ENCODE measurements at regions of chr10 and their contacts with region 1.

Region 1: DNA sequence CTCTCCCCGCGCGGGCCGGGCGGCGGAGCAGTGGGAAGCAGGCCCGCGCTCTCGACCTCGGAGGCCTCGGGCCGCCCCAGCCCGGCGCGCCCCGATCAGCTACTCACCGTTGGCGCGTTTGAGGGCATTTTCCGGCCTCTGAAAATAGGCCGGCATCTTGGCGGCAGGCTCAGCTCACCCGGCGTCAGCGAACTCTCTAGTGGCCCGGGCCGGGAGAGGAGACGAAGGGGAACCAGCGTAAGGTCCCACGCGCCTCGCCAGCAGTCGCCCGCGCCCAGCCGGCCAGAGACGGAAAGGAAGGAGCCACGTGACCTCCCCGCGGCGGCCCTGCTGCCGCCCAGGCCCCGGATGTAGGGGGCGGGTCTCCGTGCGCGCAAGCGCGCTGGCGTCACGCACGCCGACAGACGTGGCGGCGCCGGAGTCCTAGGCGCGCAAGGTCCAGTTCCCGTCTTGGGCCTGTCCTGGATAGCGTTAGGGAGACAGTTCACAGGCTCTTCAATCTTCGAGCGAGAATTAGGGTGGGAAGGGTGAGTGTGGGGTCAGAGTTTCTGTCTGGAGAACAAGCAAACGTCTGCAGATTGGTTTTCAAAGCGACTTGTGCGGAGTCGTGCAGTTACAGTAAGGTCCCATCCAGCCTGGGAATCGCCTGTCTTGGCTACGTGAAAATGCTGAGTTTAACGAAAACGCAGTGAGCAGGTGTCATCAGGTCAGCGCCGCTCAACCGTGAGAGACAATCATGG is at the start of gene EIF3A:
- DNase-seq: peak; percentile 88
- ATAC-seq: peak; percentile 90
- H3K4me3 ChIP-seq: peak within 1 kb of the TSS; percentile 100
- H3K27ac ChIP-seq: peak within 1 kb of the TSS; percentile 80
- H3K4me1 ChIP-seq: peaks cover 11% of the 10 kb centered on the region
- H3K27me3 ChIP-seq: no peaks in the 10 kb centered on the region
- CTCF ChIP-seq: no peak
- total RNA-seq, gene EIF3A: 46.0 and 56.3 TPM in 2 replicates

Region 2: GRCh38 chr10:119061352-119061751 is 19.3 kb before region 1 on chr10:
- CTCF ChIA-PET with region 1: no interaction called
- POLR2A ChIA-PET with region 1: interaction called, 13 read pairs
- intact Hi-C with region 1: no loop called
- DNase-seq: no peak
- ATAC-seq: no peak
- H3K4me3 ChIP-seq: no peak overlapping the region
- H3K27ac ChIP-seq: no peak overlapping the region
- H3K4me1 ChIP-seq: no peaks in the 10 kb centered on the region
- H3K27me3 ChIP-seq: no peaks in the 10 kb centered on the region
- CTCF ChIP-seq: no peak

Region 3: DNA sequence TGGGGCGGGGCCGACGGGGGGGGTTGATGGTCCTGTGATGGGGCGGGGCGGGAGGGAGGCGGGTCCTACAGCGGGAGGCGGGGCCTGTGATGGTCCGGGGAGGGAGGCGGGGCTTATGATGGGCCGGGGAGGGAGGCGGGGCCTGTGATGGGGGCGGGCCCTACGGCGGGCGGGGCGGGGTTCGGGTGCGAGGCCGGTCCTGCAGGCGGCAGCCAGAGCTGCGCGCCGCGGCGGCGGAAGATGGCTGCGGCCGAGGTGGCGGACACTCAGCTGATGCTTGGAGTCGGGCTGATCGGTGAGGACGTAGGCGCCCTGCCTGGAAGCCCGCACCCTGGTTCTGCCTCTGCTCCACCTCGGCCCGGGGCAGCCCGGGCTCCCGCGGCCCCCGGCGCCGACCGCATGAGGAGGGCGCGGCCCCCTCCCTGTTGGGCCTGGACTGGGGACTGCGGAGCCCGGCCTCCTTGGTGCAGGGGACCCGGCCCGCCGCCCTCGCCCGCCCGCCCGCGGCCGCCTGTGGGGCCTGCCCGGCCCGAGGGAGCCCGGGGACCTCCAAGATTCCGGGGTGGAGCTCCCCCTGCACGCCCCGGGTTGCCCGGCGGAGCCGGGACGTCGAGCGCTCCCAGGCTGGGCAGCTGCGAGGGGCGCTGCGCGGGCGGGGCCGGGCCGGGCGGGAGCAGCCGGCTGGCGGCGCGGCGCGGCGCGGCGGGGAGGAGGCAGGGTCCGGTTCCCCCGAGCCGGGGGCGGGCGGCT is 23.4 kb after region 1 on chr10 and contains the start of gene DENND10:
- CTCF ChIA-PET with region 1: interaction called, 3 read pairs
- POLR2A ChIA-PET with region 1: no interaction called
- intact Hi-C with region 1: loop called (anchors 2 kb)
- DNase-seq: peak; percentile 56
- ATAC-seq: peak; percentile 79
- H3K4me3 ChIP-seq: peak within 1 kb of the TSS; percentile 91
- H3K27ac ChIP-seq: no peak within 1 kb of the TSS
- H3K4me1 ChIP-seq: peaks cover 16% of the 10 kb centered on the region
- H3K27me3 ChIP-seq: no peaks in the 10 kb centered on the region
- CTCF ChIP-seq: no peak
- total RNA-seq, gene DENND10: 28.2 and 28.9 TPM in 2 replicates

Region 4: DNA sequence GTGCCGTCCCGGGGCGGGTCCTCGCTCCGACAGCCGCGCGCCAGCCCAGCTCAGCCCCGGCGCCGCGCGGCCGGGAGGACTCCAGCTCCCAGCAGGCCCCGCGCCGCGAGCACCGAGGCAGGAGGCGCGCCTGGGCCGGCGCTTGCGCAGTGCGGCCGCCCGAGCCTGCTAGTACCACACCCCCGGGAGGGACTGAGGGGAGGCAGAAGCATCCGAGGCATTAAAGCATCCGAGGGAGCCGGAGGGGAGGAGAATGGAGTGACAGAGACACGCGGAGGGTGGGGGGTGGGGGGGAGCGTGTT is 126.6 kb after region 1 on chr10 and contains the start of gene GRK5:
- CTCF ChIA-PET with region 1: no interaction called
- POLR2A ChIA-PET with region 1: no interaction called
- intact Hi-C with region 1: no loop called
- DNase-seq: peak; percentile 93
- ATAC-seq: peak; percentile 77
- H3K4me3 ChIP-seq: peak within 1 kb of the TSS; percentile 78
- H3K27ac ChIP-seq: peak within 1 kb of the TSS; percentile 56
- H3K4me1 ChIP-seq: peaks cover 43% of the 10 kb centered on the region
- H3K27me3 ChIP-seq: no peaks in the 10 kb centered on the region
- CTCF ChIP-seq: no peak
- total RNA-seq, gene GRK5: 4.5 and 5.0 TPM in 2 replicates

Measured in PC-3 (cell line).